ENCODE measurements at regions of chr7 and their contacts with region 1.

Region 1: GRCh38 chr7:80722616-80723141 is 84.2 kb downstream of the CD36 start:
- DNase-seq: peak; percentile 78 to 84
- ATAC-seq: peak; percentile 82
- H3K4me3 ChIP-seq: no peak overlapping the region
- H3K27ac ChIP-seq: peak overlapping the region in 1 of 2 donors; percentile 33
- H3K4me1 ChIP-seq: peaks cover 0 to 8% of the 10 kb centered on the region in 2 donors
- H3K27me3 ChIP-seq: no peaks in the 10 kb centered on the region

Region 2: GRCh38 chr7:80918909-80919662 is 196.4 kb after region 1 on chr7 and contains the start of gene SEMA3C:
- intact Hi-C with region 1: loop called in 1 of 2 experiments (anchors 10 kb)
- DNase-seq: peak; percentile 92 to 96
- ATAC-seq: peak; percentile 97
- H3K4me3 ChIP-seq: peak within 1 kb of the TSS; percentile 58 to 70
- H3K27ac ChIP-seq: peak within 1 kb of the TSS in 1 of 2 donors; percentile 1
- H3K4me1 ChIP-seq: no peaks in the 10 kb centered on the region
- H3K27me3 ChIP-seq: no peaks in the 10 kb centered on the region
- total RNA-seq, gene SEMA3C: 19.8 to 86.8 TPM

Measured in aorta (tissue), 5 donors.